Gastrocnemius medialis (tissue), 4 donors: ENCODE measurements at regions of chr4 and their contacts with region 1.

Region 1: GRCh38 chr4:118740869-118741268 is 55.7 kb downstream of the METTL14 start:
- DNase-seq: no peak
- ATAC-seq: no peak
- H3K4me3 ChIP-seq: peak overlapping the region; percentile 15 to 33 (median 20)
- H3K27ac ChIP-seq: peak overlapping the region; percentile 30 to 63 (median 43)
- H3K4me1 ChIP-seq: peaks cover 14 to 25% of the 10 kb centered on the region in 2 donors
- H3K27me3 ChIP-seq: no peaks in the 10 kb centered on the region
- CTCF ChIP-seq: peak; percentile 31 to 60 (median 51)
- POLR2A ChIP-seq: no peak

Region 2: GRCh38 chr4:118865091-118865708 is 124.3 kb after region 1 on chr4:
- in situ Hi-C with region 1: no loop called
- intact Hi-C with region 1: loop called (anchors 2 kb)
- DNase-seq: peak in 1 of 2 donors; percentile 43
- ATAC-seq: peak; percentile 83 to 97
- H3K4me3 ChIP-seq: no peak overlapping the region
- H3K27ac ChIP-seq: no peak overlapping the region
- H3K4me1 ChIP-seq: peaks cover 0 to 5% of the 10 kb centered on the region in 2 donors
- H3K27me3 ChIP-seq: no peaks in the 10 kb centered on the region
- CTCF ChIP-seq: peak; percentile 13 to 66 (median 51)
- POLR2A ChIP-seq: no peak

Region 3: DNA sequence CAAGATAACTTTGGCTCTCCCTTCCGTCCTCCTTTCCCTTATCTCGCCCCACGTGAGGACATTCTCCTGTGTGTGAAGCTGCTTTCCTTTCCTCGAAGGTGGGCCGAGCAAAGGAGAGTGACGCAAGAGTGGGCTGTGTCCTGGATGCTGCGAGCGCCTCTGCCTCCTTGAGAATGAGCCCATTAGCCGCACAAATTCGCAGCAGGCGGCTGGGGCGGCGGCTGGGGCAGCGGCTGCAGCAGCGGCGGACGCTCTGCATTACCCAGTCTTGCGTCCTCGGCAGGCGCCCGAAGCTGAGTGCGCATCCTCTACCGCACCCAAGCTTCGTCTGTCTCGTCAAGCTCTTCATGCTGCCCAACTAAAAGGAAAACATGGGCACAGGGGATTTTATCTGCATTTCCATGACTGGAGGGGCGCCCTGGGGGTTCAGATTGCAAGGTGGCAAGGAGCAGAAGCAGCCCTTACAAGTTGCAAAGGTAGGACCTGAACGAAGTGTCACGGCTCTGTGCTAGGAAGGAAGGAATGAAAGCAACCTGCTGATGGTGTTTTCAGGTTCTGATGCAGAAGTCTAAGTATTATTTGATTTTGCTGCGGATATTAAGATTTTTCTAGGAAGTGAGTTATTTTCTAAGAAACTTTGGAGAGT is 147.9 kb after region 1 on chr4 and contains the start of gene SYNPO2:
- in situ Hi-C with region 1: no loop called
- intact Hi-C with region 1: loop called (anchors 1 kb)
- DNase-seq: peak; percentile 48 to 73
- ATAC-seq: peak; percentile 67 to 69
- H3K4me3 ChIP-seq: peak within 1 kb of the TSS; percentile 51 to 78 (median 66)
- H3K27ac ChIP-seq: peak within 1 kb of the TSS; percentile 72 to 88 (median 85)
- H3K4me1 ChIP-seq: peaks cover 28 to 36% of the 10 kb centered on the region in 2 donors
- H3K27me3 ChIP-seq: no peaks in the 10 kb centered on the region
- CTCF ChIP-seq: no peak
- POLR2A ChIP-seq: peak; percentile 10 to 54
- total RNA-seq, gene SYNPO2: 998 to 4,186 (median 1,764) TPM

Region 4: DNA sequence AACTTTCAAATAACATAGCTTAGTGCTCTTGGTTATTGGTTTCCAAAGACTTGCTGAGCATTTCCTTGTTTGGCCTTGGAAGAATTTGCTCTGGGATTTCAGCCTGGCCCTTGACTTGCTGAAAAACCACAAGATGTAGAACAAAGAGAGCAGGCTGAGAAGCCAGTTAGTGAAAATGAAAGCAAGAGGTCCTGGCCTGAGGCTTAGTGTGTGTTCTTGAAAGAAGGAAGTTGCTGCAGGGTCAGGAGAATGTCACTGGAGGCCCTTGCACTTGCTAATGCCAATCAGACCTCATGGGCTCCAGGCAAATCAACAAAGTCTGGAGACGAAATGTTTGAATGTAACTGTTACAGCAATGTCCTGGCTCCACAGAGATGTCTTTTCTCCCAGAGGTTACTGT is 227.1 kb after region 1 on chr4:
- in situ Hi-C with region 1: loop called in 3 of 4 experiments (anchors 10 kb)
- intact Hi-C with region 1: loop called (anchors 1 kb)
- DNase-seq: peak; percentile 87 to 91
- ATAC-seq: peak; percentile 82 to 83
- H3K4me3 ChIP-seq: peak overlapping the region in 3 of 4 donors; percentile 24 to 36 (median 33)
- H3K27ac ChIP-seq: peak overlapping the region; percentile 87 to 99 (median 92)
- H3K4me1 ChIP-seq: peaks cover 55 to 63% of the 10 kb centered on the region in 2 donors
- H3K27me3 ChIP-seq: no peaks in the 10 kb centered on the region
- CTCF ChIP-seq: no peak
- POLR2A ChIP-seq: no peak

Region 5: GRCh38 chr4:118974758-118975157 is 233.9 kb after region 1 on chr4:
- in situ Hi-C with region 1: loop called in 3 of 4 experiments (anchors 10 kb)
- intact Hi-C with region 1: no loop called
- DNase-seq: no peak
- ATAC-seq: no peak
- H3K4me3 ChIP-seq: peak overlapping the region in 3 of 4 donors; percentile 23 to 43 (median 39)
- H3K27ac ChIP-seq: peak overlapping the region; percentile 87 to 99 (median 92)
- H3K4me1 ChIP-seq: peaks cover 40 to 46% of the 10 kb centered on the region in 2 donors
- H3K27me3 ChIP-seq: no peaks in the 10 kb centered on the region
- CTCF ChIP-seq: no peak
- POLR2A ChIP-seq: no peak

Region 6: DNA sequence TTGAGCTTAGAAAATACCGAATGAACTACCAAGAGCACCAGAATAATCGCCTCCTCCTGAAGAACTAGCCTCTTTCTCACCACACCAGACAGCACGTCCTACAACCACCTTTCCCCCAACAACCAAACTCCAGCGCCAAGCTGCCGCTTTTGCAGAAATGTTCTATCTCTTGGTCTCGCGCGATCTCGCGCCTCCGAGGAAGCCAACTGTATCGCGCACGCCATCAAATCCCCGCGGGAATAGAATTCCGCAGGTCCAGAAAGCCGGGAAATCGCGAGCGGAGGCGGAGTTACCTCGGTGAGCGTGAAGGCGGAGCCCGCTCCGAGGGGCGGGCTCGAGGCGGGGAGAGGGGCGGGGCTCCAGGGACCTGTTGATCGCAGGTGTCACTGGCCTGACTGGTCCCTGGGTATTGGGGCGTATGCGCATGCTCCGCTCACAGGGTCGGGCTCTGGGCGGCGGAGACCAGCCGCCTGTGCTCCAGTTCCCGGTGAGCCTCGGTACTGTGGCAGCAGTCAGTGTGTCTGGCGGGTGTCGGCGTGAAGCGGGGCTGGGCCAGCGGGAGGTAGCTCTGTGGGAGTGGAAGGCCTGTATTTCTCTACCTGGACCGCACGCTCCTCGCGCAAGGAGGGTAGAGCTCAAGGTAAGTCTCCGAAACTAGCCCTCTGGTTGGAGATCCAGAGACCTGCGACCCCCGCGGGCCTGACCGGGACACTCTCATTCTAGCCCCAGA is 471.5 kb after region 1 on chr4 and contains the start of gene USP53:
- in situ Hi-C with region 1: no loop called
- intact Hi-C with region 1: loop called (anchors 10 kb)
- DNase-seq: peak; percentile 99
- ATAC-seq: peak; percentile 85 to 88
- H3K4me3 ChIP-seq: peak within 1 kb of the TSS; percentile 79 to 96 (median 88)
- H3K27ac ChIP-seq: peak within 1 kb of the TSS; percentile 95 to 99 (median 98)
- H3K4me1 ChIP-seq: peaks cover 28% of the 10 kb centered on the region in 2 donors
- H3K27me3 ChIP-seq: no peaks in the 10 kb centered on the region
- CTCF ChIP-seq: peak in 2 of 5 experiments; percentile 18 to 51
- POLR2A ChIP-seq: peak; percentile 97 to 99
- total RNA-seq, gene USP53: 56.9 to 190 (median 98.5) TPM

Region 7: DNA sequence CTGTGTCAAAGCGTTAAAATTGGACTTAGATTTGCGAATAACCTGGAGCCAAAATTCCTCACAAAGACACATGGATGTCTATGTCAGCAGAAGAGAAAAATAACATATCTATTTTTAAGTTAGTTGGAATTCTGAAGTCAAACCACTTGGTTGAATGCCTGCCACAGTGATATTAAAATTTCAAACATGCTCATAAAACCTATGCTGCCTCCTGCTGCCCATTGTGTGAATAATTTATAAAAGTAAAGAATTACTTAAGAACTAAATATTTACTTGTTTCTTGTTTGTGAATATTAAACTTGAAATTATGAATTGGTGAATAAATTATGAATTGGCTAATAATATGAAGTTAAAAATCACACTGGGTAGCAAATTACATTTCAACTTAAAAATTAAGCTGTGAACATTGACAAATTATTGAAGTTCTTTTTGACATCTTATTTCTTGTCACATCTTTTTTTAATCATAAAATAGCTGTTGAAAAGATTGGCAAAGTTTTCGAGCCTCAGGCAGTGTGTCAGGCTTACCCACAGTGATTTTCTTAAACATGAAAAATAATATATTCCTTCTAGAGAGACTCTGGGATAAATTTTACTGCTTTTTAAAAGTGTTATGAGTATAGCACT is 545.6 kb after region 1 on chr4:
- in situ Hi-C with region 1: no loop called
- intact Hi-C with region 1: loop called (anchors 10 kb)
- DNase-seq: peak in 1 of 2 donors; percentile 28
- ATAC-seq: peak; percentile 73 to 80
- H3K4me3 ChIP-seq: peak overlapping the region in 1 of 4 donors; percentile 6
- H3K27ac ChIP-seq: peak overlapping the region; percentile 64 to 77 (median 69)
- H3K4me1 ChIP-seq: peaks cover 57 to 62% of the 10 kb centered on the region in 2 donors
- H3K27me3 ChIP-seq: no peaks in the 10 kb centered on the region
- CTCF ChIP-seq: peak; percentile 48 to 77 (median 64)
- POLR2A ChIP-seq: no peak